ENCODE measurements at regions of chr2 and their contacts with region 1.

Region 1: GRCh38 chr2:161077367-161078210 is 82.6 kb upstream of the TANK start:
- DNase-seq: peak; percentile 84
- H3K4me3 Mint-ChIP-seq: peak overlapping the region; percentile 6
- H3K27ac Mint-ChIP-seq: peak overlapping the region; percentile 85
- H3K4me1 Mint-ChIP-seq: peaks cover 42% of the 10 kb centered on the region
- H3K27me3 Mint-ChIP-seq: no peaks in the 10 kb centered on the region

Region 2: GRCh38 chr2:160269803-160270570 is 807.6 kb before region 1 on chr2:
- CTCF ChIA-PET with region 1: no interaction called
- POLR2A ChIA-PET with region 1: no interaction called
- intact Hi-C with region 1: loop called (anchors 1 kb)
- DNase-seq: peak; percentile 81
- H3K4me3 Mint-ChIP-seq: peak overlapping the region; percentile 63
- H3K27ac Mint-ChIP-seq: peak overlapping the region; percentile 28
- H3K4me1 Mint-ChIP-seq: peaks cover 45% of the 10 kb centered on the region
- H3K27me3 Mint-ChIP-seq: peaks cover 5% of the 10 kb centered on the region

Region 3: DNA sequence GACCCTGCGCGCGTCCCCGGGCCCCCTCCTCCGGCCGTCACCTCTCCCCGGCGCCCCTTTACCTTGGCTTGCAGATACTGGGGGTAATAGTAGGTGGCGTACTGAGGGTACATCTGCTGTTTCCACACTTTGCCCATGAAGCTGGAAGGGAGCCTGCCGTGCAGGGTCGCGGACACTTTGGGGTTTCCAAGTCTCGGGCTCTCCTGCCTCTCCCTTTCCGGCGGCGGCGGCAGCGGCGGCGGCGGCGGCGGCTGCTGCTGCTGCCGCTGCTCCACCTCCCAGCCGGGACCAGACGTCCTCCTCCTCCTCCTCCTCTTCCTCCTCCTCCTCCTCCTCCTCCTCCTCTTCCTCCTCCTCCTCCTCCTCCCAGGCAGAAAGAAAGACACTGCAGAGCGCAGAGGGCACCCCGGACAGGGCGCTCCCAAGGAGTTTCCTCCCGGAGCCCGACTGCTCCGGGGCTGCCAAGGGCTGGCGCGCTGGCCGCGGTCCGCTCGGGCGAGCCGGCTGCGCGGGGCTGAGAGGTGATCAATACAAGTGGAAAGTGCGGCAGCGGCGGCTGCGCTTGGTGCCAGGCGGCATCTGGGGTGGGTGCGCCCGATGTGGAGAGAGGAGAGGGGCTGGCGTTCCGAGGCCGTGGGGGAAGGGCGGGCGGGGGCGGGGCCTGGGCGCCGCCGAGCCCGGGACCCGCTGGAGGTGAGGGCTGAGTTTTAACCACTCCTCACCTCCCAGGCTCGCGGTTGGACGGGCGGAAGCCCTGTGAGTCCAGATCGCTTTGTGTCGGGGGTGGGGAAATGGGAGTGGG is 584.2 kb before region 1 on chr2 and contains the start of gene RBMS1:
- CTCF ChIA-PET with region 1: no interaction called
- POLR2A ChIA-PET with region 1: no interaction called
- intact Hi-C with region 1: loop called (anchors 5 kb)
- DNase-seq: peak; percentile 59
- H3K4me3 Mint-ChIP-seq: peak within 1 kb of the TSS; percentile 95
- H3K27ac Mint-ChIP-seq: peak within 1 kb of the TSS; percentile 93
- H3K4me1 Mint-ChIP-seq: peaks cover 36% of the 10 kb centered on the region
- H3K27me3 Mint-ChIP-seq: no peaks in the 10 kb centered on the region
- total RNA-seq, gene RBMS1: 37.9 to 40.0 TPM

Region 4: GRCh38 chr2:161122772-161123530 is 45.4 kb after region 1 on chr2:
- CTCF ChIA-PET with region 1: no interaction called
- POLR2A ChIA-PET with region 1: interaction called, 3 read pairs
- intact Hi-C with region 1: loop called (anchors 1 kb)
- DNase-seq: peak; percentile 62
- H3K4me3 Mint-ChIP-seq: peak overlapping the region; percentile 17
- H3K27ac Mint-ChIP-seq: peak overlapping the region; percentile 58
- H3K4me1 Mint-ChIP-seq: peaks cover 24% of the 10 kb centered on the region
- H3K27me3 Mint-ChIP-seq: no peaks in the 10 kb centered on the region

Region 5: GRCh38 chr2:161243905-161244304 is 166.3 kb after region 1 on chr2:
- CTCF ChIA-PET with region 1: no interaction called
- POLR2A ChIA-PET with region 1: no interaction called
- intact Hi-C with region 1: loop called (anchors 2 kb)
- DNase-seq: peak; percentile 34
- H3K4me3 Mint-ChIP-seq: peak overlapping the region; percentile 89
- H3K27ac Mint-ChIP-seq: peak overlapping the region; percentile 91
- H3K4me1 Mint-ChIP-seq: peaks cover 54% of the 10 kb centered on the region
- H3K27me3 Mint-ChIP-seq: no peaks in the 10 kb centered on the region

Region 6: DNA sequence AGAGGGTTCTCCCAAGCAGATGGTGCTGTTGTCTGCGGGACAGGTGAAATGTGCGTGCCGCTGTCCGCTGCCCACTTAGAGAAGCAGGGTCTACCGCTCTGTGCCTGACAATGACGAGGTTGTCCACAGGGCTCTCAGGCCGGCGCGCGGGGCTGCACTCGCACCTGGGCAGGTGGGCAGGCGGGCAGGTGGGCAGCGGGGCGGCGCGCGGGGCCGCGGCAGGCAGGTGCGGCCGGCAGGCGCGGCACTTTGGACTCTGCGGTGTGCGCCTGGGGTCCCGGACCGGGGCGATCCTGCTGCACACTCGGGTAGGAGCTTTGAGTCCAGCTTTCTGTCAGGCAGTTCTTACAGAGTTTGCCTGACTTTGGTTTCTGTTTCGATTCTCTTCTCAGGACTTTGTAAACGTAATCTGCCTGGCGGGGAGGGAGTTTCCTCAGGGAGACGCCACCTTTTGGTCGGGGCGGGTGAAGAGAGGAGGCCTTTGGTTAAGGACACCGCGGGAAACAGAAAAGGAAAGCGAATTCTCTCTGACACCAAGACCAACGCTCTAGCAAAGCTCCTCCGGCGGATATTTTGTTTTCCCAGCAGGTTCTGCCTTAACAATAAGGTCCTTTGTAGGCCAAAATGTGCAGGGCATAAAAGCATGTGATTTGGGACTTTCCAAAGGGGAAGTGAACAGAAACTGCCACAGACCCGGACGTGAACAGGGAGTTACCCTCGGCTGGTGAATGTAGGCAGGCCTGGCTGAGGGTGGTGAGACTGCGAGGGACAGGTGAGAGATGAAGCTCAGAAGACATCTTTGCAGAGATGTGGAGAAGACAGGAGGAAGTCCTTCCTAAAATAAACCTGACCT is 1241.0 kb after region 1 on chr2 and contains the start of gene IFIH1:
- CTCF ChIA-PET with region 1: no interaction called
- POLR2A ChIA-PET with region 1: no interaction called
- intact Hi-C with region 1: loop called (anchors 5 kb)
- DNase-seq: peak; percentile 87
- H3K4me3 Mint-ChIP-seq: peak within 1 kb of the TSS; percentile 85
- H3K27ac Mint-ChIP-seq: peak within 1 kb of the TSS; percentile 95
- H3K4me1 Mint-ChIP-seq: peaks cover 55% of the 10 kb centered on the region
- H3K27me3 Mint-ChIP-seq: no peaks in the 10 kb centered on the region
- total RNA-seq, gene IFIH1: 33.3 to 34.2 TPM

Measured in activated CD4-positive, alpha-beta memory T cell treated with anti-CD3 and anti-CD28 coated beads for 36 hours (primary cell).